ENCODE measurements at regions of chr17 and their contacts with region 1.

Region 1: DNA sequence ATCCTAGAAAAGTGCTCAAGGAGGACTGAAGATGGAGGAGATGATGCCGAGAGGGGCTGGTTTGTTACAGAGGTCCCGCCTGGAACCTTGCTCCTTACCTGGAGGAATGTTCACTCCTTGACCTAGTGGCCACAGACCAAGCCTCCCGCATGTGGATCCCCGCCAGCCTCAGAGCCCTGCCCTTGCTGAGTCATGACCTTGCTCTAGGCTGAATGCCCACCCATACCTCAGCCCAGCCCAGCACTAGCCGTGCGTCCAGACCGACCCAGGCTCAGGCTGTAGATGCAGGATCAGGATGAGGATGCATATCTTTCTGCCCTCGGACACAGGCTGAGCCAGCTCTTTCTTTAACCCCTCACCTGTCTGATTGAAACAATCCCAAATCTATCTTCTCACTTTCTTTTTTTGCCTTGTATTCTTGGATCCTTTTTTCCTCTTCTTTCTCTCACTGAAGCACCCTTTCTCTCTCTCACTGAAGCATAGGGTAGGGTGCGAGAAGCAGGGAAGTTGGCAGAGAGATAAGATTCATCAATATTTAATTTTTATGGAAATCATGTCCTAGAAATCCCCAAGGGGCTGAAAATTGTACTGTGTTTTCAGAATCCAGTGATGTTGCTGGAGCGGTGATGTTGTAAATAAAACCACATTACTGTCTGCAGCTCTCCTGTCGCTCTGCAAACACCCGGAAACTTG is 34.9 kb downstream of the WSCD1 start:
- DNase-seq: no peak
- ATAC-seq: peak in 1 of 4 donors; percentile 53
- H3K4me3 ChIP-seq: no peak overlapping the region
- H3K27ac ChIP-seq: no peak overlapping the region
- H3K4me1 ChIP-seq: peaks cover 4% of the 10 kb centered on the region
- H3K27me3 ChIP-seq: no peaks in the 10 kb centered on the region
- CTCF ChIP-seq: no peak

Region 2: GRCh38 chr17:5364156-5364555 is 740.9 kb before region 1 on chr17:
- intact Hi-C with region 1: no loop called
- DNase-seq: no peak
- ATAC-seq: no peak
- H3K4me3 ChIP-seq: no peak overlapping the region
- H3K27ac ChIP-seq: no peak overlapping the region
- H3K4me1 ChIP-seq: no peaks in the 10 kb centered on the region
- H3K27me3 ChIP-seq: no peaks in the 10 kb centered on the region
- CTCF ChIP-seq: no peak

Region 3: DNA sequence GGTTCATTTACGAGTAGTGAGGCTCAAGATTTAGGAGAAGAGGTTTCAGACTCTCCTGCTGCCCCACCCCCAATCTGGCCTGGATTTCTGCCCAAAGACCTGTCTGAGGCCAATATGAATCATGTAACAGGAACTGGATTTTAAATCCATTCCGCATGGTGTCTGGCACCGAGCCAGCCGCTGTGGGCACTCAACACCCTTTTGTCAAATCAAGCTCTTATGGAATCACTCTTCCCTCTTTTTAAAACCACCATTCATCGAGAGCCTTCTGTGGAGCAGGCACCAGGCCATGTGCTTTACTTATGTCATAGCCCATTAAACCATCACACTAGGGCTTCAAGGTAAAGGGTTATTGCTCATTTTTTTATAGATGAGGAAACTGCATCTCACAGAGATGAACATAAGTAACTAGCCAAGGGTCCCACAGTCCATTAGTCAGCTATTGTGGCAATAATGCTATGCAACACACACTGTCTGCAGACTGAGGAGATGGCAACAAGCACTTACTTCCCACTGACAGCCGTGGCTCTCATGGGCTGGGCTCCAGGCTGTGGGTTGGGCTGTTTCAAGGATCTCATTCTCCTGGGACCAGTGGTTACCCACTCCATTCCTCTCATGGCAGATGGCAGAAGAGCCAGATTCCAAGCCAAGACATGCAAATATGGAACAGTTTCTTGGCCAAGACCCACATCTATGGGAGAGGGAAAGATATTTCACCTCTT is 58.7 kb after region 1 on chr17:
- intact Hi-C with region 1: loop called in 1 of 2 experiments (anchors 5 kb)
- DNase-seq: peak in 1 of 2 donors; percentile 34
- ATAC-seq: peak in 1 of 4 donors; percentile 13
- H3K4me3 ChIP-seq: no peak overlapping the region
- H3K27ac ChIP-seq: no peak overlapping the region
- H3K4me1 ChIP-seq: peaks cover 2% of the 10 kb centered on the region
- H3K27me3 ChIP-seq: no peaks in the 10 kb centered on the region
- CTCF ChIP-seq: no peak